Gastrocnemius medialis (tissue), 4 donors: ENCODE measurements at regions of chrX and their contacts with region 1.

Region 1: GRCh38 chrX:106611679-106612392 is at the start of gene RADX:
- DNase-seq: peak; percentile 18 to 70
- ATAC-seq: peak; percentile 84 to 90
- H3K4me3 ChIP-seq: peak within 1 kb of the TSS; percentile 52 to 73 (median 59)
- H3K27ac ChIP-seq: peak within 1 kb of the TSS; percentile 20 to 54 (median 46)
- H3K4me1 ChIP-seq: peaks cover 0 to 4% of the 10 kb centered on the region in 2 donors
- H3K27me3 ChIP-seq: no peaks in the 10 kb centered on the region
- CTCF ChIP-seq: no peak
- POLR2A ChIP-seq: peak; percentile 33 to 44
- total RNA-seq, gene RADX: 0.12 to 1.7 (median 0.82) TPM

Region 2: DNA sequence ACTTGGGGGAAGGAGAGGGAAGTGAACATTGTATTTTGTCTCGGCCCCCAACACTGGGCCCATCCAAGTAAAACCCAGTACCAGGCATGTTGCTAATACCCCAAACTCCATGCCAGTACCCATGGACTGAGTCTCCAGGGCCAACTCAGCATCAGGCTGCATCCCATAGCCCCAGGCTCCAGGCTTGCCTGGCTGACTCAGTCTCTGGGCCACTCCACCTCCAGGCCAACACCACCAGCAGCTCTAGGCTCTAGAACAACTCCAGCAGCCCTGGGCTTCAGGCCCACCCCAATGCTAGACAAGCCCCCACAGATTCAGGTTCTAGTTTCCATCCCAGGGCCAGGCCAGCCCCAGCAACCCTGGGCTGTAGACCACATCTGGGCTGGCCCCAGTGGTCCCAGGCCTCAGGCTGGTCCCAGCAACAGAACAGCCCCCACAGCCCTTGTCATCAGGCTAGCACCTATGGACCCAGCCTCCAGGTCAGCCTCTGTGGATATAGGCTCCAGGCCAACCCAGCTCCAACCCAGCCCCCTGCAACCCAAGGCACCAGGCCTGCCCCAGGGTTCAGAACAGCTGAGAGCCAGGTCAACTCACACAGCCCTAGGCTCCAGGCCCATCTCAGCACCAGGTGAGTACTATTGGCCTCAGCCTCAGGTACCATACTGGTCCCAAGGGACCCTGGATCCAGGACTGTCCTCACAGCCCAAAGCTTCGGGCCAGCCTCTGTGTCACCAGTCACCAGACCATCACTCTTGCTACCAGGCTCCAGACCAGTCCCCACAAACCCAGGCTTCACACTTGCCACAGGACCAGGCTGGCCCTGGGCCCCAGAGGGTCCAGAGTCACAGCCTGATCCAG is 288.6 kb before region 1 on chrX:
- in situ Hi-C with region 1: no loop called
- intact Hi-C with region 1: no loop called
- DNase-seq: no peak
- ATAC-seq: no peak
- H3K4me3 ChIP-seq: no peak overlapping the region
- H3K27ac ChIP-seq: no peak overlapping the region
- H3K4me1 ChIP-seq: no peaks in the 10 kb centered on the region
- H3K27me3 ChIP-seq: no peaks in the 10 kb centered on the region
- CTCF ChIP-seq: no peak
- POLR2A ChIP-seq: no peak

Region 3: DNA sequence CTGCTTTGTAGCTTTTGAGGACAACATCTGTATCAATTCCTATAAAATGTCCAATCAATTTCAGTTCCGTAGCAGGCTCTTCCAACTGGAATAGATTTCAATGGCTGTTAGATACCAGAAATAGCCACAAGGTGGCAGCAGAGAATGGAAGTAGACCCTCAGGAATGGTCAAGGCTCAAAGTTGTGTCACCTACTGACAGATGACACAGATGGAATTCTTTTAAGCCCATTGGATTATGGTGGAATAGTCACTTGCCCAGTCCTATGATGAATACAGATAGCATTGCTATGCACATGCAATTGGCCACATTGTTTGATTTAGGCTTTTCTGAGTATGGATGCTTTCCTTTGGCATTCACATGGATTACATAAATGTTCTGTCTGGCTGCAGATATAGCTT is 130.5 kb before region 1 on chrX:
- in situ Hi-C with region 1: no loop called
- intact Hi-C with region 1: loop called (anchors 10 kb)
- DNase-seq: peak in 1 of 2 donors; percentile 2
- ATAC-seq: peak; percentile 65 to 87
- H3K4me3 ChIP-seq: no peak overlapping the region
- H3K27ac ChIP-seq: no peak overlapping the region
- H3K4me1 ChIP-seq: no peaks in the 10 kb centered on the region
- H3K27me3 ChIP-seq: no peaks in the 10 kb centered on the region
- CTCF ChIP-seq: peak; percentile 52 to 84 (median 67)
- POLR2A ChIP-seq: no peak

Region 4: DNA sequence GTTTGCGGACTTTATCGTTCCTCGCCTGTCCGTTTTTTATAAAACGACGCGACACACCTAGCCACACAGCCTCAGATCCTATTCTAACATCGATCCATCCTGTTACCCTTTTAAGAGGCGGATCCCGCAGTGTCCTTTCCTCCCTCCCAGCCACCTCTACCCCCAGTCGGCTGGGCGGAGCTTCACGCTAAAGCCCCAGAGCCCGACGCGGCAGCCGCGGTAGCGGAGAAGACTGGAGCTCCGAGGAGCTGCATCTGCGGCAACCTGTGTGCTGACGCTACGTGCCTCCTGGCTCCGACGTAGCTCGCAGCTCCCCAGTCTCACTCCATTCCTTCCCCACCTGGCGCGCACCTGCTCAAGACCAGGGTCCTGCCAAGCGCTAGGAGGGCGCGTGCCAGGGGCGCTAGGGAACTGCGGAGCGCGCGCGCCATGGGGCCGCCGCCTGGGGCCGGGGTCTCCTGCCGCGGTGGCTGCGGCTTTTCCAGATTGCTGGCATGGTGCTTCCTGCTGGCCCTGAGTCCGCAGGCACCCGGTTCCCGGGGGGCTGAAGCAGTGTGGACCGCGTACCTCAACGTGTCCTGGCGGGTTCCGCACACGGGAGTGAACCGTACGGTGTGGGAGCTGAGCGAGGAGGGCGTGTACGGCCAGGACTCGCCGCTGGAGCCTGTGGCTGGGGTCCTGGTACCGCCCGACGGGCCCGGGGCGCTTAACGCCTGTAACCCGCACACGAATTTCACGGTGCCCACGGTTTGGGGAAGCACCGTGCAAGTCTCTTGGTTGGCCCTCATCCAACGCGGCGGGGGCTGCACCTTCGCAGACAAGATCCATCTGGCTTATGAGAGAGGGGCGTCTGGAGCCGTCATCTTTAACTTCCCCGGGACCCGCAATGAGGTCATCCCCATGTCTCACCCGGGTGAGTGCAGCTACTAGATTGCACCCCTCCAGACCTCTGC is 114.9 kb after region 1 on chrX and contains the start of gene RNF128:
- in situ Hi-C with region 1: no loop called
- intact Hi-C with region 1: loop called (anchors 5 kb)
- DNase-seq: peak; percentile 9 to 57
- ATAC-seq: peak; percentile 79 to 87
- H3K4me3 ChIP-seq: peak within 1 kb of the TSS; percentile 57 to 70 (median 64)
- H3K27ac ChIP-seq: peak within 1 kb of the TSS; percentile 81 to 92 (median 88)
- H3K4me1 ChIP-seq: peaks cover 0 to 4% of the 10 kb centered on the region in 2 donors
- H3K27me3 ChIP-seq: peaks cover 0 to 11% (median 8%) of the 10 kb centered on the region in 3 donors
- CTCF ChIP-seq: no peak
- POLR2A ChIP-seq: peak; percentile 25 to 44
- total RNA-seq, gene RNF128: 2.7 to 12.2 (median 5.5) TPM

Region 5: GRCh38 chrX:106791495-106791894 is 179.7 kb after region 1 on chrX:
- in situ Hi-C with region 1: loop called in 1 of 4 experiments (anchors 25 kb)
- intact Hi-C with region 1: no loop called
- DNase-seq: no peak
- ATAC-seq: no peak
- H3K4me3 ChIP-seq: no peak overlapping the region
- H3K27ac ChIP-seq: no peak overlapping the region
- H3K4me1 ChIP-seq: no peaks in the 10 kb centered on the region
- H3K27me3 ChIP-seq: no peaks in the 10 kb centered on the region
- CTCF ChIP-seq: peak in 2 of 5 experiments; percentile 18 to 29
- POLR2A ChIP-seq: no peak

Region 6: GRCh38 chrX:106802387-106803275 is 190.8 kb after region 1 on chrX and contains the start of gene TBC1D8B:
- in situ Hi-C with region 1: loop called in 1 of 4 experiments (anchors 25 kb)
- intact Hi-C with region 1: loop called (anchors 5 kb)
- DNase-seq: peak; percentile 66 to 81
- ATAC-seq: peak; percentile 100
- H3K4me3 ChIP-seq: peak within 1 kb of the TSS; percentile 56 to 74 (median 62)
- H3K27ac ChIP-seq: peak within 1 kb of the TSS in 3 of 4 donors; percentile 39 to 62 (median 52)
- H3K4me1 ChIP-seq: peaks cover 0 to 4% of the 10 kb centered on the region in 2 donors
- H3K27me3 ChIP-seq: no peaks in the 10 kb centered on the region
- CTCF ChIP-seq: no peak
- POLR2A ChIP-seq: peak in 1 of 2 donors; percentile 18
- total RNA-seq, gene TBC1D8B: 0.55 to 4.8 (median 0.86) TPM

Region 7: DNA sequence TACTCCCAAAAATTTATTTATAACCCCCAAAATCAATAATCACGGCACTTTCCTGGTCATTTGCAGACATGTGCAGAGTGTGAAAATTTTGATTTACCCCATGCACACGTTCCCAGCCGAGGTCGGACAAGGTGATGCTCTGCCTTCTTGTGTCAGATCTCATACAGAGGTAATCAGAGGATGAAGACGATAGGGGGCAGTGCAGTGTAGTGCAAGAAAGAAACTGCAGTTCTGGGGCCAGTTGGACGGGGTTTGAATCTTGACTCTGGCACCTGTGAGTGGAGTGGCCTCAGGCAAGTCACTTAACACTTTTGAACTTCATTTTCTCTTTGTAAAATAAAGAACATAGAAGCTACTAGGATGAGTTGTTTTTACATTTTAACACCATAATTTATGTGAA is 926.0 kb after region 1 on chrX:
- in situ Hi-C with region 1: no loop called
- intact Hi-C with region 1: no loop called
- DNase-seq: no peak
- ATAC-seq: no peak
- H3K4me3 ChIP-seq: no peak overlapping the region
- H3K27ac ChIP-seq: no peak overlapping the region
- H3K4me1 ChIP-seq: no peaks in the 10 kb centered on the region
- H3K27me3 ChIP-seq: no peaks in the 10 kb centered on the region
- CTCF ChIP-seq: peak in 2 of 5 experiments; percentile 18 to 33
- POLR2A ChIP-seq: no peak

Region 8: GRCh38 chrX:108122748-108123147 is 1510.9 kb after region 1 on chrX:
- in situ Hi-C with region 1: no loop called
- intact Hi-C with region 1: loop called (anchors 5 kb)
- DNase-seq: no peak
- ATAC-seq: no peak
- H3K4me3 ChIP-seq: no peak overlapping the region
- H3K27ac ChIP-seq: peak overlapping the region in 3 of 4 donors; percentile 33 to 46 (median 38)
- H3K4me1 ChIP-seq: peaks cover 5 to 22% of the 10 kb centered on the region in 2 donors
- H3K27me3 ChIP-seq: no peaks in the 10 kb centered on the region
- CTCF ChIP-seq: no peak
- POLR2A ChIP-seq: no peak